WTC11 (cell line): ENCODE measurements at regions of chr3 and their contacts with region 1.

Region 1: DNA sequence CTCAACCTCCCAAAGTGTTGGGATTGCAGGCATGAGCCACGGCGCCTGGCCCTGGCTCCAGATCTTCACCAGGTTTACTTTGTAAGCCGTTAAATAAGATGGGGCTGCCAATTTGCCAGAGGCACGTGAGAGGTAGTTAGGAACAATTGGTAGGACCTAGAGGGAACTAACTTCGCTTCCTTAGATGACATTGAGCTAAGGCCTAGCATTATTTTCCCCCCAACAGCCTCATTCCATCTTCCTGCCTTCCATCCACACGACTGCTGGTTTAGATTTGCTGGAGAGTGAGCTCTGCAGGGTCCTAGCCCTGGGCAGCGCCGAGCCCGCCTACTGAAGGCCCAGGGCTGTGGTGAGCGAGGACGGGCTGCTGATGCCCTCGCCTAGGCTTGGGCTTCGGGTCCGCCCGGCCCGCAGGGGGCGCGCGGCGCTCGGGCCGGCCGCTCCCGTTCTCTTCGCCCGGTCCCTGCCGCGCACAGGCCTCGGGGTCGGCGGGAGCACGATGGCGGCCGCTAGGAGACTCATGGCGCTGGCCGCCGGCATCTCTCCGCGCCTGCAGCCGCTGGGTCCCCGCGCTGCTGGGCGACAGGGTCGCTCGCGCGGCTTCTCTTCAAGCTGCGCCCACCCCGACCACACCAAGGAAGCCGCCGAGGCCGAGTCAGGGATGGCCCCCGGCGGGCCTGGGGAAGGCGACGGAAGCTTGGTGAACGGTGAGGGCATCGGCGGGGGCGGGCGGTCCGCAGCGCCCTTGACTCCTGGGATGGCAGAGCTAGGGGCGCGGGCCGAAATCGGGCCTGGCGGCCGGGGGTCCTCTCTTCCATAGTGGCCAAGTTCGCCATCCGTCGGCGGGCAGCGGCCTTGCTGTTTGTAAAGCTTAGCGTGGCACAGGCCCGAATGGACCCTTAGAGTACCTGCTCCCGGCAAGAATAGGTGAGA is 21.9 kb downstream of the DHX30 start:
- DNase-seq: peak; percentile 82
- ATAC-seq: peak; percentile 99
- H3K4me3 Mint-ChIP-seq: peak overlapping the region; percentile 94
- H3K27ac Mint-ChIP-seq: peak overlapping the region; percentile 91
- H3K4me1 Mint-ChIP-seq: peaks cover 11% of the 10 kb centered on the region
- H3K27me3 Mint-ChIP-seq: no peaks in the 10 kb centered on the region
- CTCF ChIP-seq: peak; percentile 41; the same call in 1 of the 2 replicates

Region 2: DNA sequence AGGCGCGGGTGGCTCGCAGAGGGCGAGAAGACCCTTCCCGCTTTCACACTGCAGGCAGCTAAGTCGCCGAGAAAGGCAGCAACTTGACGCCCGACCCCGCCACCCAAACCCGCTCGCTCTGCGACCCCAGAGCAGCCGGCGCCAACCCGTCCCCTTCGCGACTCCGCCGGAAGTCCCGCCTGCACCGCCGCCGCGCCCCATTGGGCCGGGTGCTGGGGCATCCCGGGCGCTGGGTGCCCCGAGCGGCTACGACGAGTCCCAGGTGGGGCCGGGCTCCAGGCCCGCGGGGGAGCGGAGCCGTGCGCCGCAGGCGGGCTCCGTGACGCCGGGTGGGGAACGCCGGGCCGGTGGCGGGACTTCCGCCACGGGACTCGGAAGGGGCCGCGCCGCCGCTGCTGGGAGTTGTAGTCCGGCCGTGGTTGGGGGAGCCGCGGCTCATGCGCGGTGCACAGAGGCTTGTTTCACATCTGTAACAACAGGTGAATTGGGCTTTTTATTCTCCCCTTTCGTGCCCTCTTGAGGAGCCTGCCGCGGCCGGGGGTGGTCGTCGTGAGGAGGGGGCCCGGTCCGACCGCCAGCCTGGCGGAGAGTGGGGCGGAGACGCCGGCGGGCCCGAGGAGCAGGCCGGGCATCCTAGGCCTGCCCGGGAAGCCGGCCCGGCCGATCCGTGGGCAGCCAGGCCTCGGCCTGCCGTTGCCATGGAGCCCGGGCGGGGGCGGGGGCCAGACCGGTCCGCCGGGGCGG is 21.9 kb before region 1 on chr3 and contains the start of gene DHX30:
- CTCF ChIA-PET with region 1: interaction called, 10 read pairs
- POLR2A ChIA-PET with region 1: interaction called, 3 read pairs
- DNase-seq: peak; percentile 71
- ATAC-seq: peak; percentile 76
- H3K4me3 Mint-ChIP-seq: peak within 1 kb of the TSS; percentile 98
- H3K27ac Mint-ChIP-seq: peak within 1 kb of the TSS; percentile 98
- H3K4me1 Mint-ChIP-seq: peaks cover 11% of the 10 kb centered on the region; the same call in 1 of the 2 replicates
- H3K27me3 Mint-ChIP-seq: no peaks in the 10 kb centered on the region
- CTCF ChIP-seq: no peak
- total RNA-seq, gene DHX30: 97.3 to 99.2 TPM (median 98.1 TPM) in 3 replicates

Region 3: DNA sequence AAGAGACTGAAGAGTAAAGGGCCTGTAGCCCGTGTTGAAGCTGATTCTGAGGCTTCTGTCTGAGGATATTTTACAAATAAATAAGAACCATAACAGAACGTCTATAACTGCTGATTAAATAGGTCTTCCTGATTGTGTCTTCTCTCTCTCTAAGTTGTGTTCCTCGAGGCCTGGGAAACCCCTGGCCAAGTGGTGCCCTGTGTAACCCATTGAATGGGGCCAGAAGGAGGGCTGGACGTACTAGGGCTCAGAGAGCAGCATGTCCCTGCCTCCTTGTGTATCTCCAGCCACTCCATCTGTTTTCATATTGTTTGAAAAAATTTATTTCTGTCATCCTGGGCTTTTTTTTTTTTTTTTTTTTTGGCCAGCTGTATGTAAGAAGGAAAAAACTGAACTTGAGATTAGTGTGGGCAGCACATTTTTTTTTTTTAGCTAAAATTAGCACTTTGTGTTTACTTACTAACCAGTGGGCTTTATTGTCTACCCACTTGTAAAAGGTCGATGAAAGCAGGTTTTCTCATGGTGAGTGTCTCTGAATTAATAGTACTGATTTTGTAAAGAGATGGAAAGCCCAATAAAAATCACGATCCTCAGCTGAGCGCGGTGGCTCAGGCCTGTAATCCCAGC is 11.1 kb before region 1 on chr3:
- CTCF ChIA-PET with region 1: interaction called, 25 read pairs
- POLR2A ChIA-PET with region 1: interaction called, 5 read pairs
- DNase-seq: no peak
- ATAC-seq: no peak
- H3K4me3 Mint-ChIP-seq: no peak overlapping the region
- H3K27ac Mint-ChIP-seq: peak overlapping the region; percentile 82; the same call in 1 of the 2 replicates
- H3K4me1 Mint-ChIP-seq: no peaks in the 10 kb centered on the region
- H3K27me3 Mint-ChIP-seq: no peaks in the 10 kb centered on the region
- CTCF ChIP-seq: no peak

Region 4: GRCh38 chr3:47989981-47990440 is 165.2 kb after region 1 on chr3:
- CTCF ChIA-PET with region 1: interaction called, 13 read pairs
- POLR2A ChIA-PET with region 1: no interaction called
- DNase-seq: peak; percentile 67
- ATAC-seq: peak; percentile 97
- H3K4me3 Mint-ChIP-seq: no peak overlapping the region
- H3K27ac Mint-ChIP-seq: peak overlapping the region; percentile 38; the same call in 1 of the 2 replicates
- H3K4me1 Mint-ChIP-seq: peaks cover 14% of the 10 kb centered on the region
- H3K27me3 Mint-ChIP-seq: no peaks in the 10 kb centered on the region
- CTCF ChIP-seq: peak; percentile 94

Region 5: DNA sequence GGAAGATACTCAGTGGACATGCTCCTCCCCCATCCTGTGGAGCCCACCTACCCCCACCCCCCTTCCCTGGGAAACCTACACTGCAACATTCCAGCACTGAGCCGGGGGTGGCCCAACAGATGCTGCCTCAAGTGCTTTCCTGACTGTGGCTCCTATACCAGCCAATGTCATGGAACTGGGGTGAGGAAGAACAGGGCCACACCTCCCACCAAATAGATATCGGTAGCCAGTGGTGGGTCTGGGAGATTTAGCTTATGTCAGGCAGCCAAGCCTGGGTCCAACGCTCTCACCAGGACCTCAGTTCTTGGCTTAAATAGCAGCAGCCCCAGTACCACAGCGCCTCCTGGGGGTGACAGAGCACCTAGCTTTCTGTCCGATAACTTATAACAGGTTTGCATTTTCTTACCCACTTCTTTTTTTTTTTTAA is 333.2 kb after region 1 on chr3:
- CTCF ChIA-PET with region 1: interaction called, 16 read pairs
- POLR2A ChIA-PET with region 1: no interaction called
- DNase-seq: peak; percentile 82
- ATAC-seq: peak; percentile 69
- H3K4me3 Mint-ChIP-seq: no peak overlapping the region
- H3K27ac Mint-ChIP-seq: peak overlapping the region; percentile 34; the same call in 1 of the 2 replicates
- H3K4me1 Mint-ChIP-seq: peaks cover 8% of the 10 kb centered on the region
- H3K27me3 Mint-ChIP-seq: no peaks in the 10 kb centered on the region
- CTCF ChIP-seq: peak; percentile 78